WTC11 (cell line): ENCODE measurements at regions of chr15 and their contacts with region 1.

Region 1: DNA sequence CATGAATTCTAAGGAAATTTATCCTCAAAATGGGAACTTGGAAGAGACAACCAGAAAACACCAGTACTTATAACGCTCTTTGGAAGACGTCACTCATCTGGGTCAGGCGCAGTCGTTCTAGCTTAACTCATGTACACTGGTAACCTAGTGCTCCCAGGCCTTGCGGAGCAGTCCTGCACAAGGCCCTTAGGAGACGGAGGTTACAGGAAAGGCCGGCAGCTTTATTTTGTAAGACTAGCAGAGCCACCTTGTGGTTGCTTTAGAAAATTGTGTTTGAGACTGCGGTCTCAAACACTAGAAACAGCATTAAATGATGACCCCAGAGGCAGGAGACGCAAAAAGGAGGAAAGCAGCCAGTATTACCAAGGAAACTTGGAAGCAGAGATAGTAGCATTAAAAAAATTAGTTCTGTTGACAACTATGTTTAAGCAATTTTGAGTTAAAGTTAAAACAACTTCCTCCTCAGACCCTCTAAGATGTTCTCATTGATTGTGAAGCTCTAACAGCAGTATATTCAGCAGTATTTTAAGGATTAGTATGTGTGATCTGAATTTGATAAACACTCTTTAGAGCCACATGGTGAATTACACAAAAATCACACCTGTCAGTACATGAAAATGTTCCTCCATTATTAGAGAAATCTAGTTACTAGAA is 141.9 kb upstream of the C2CD4B start:
- DNase-seq: peak; percentile 62
- ATAC-seq: peak; percentile 99
- H3K4me3 Mint-ChIP-seq: no peak overlapping the region
- H3K27ac Mint-ChIP-seq: no peak overlapping the region
- H3K4me1 Mint-ChIP-seq: peaks cover 14% of the 10 kb centered on the region
- H3K27me3 Mint-ChIP-seq: no peaks in the 10 kb centered on the region
- CTCF ChIP-seq: peak; percentile 57

Region 2: DNA sequence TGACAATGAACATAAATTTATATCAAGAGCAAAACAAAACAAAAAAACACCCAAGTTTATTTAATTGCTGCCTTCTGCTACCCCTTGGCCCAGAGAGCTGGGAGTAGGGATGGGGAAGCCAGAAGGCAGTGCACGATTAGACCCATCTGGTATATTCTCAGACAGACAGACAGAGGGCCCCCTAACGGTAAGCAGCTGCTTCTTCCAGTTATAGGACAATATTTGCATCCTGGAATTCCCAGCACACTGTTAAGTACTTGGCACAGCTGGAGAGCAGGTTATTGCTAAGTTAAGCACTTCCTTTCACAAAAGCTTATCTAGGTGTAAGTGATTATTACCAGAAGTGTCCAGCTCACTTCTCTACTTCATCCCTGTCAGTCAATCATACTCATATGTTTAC is 181.2 kb before region 1 on chr15:
- CTCF ChIA-PET with region 1: interaction called, 14 read pairs
- POLR2A ChIA-PET with region 1: no interaction called
- DNase-seq: no peak
- ATAC-seq: peak; percentile 62
- H3K4me3 Mint-ChIP-seq: no peak overlapping the region
- H3K27ac Mint-ChIP-seq: no peak overlapping the region
- H3K4me1 Mint-ChIP-seq: peaks cover 21% of the 10 kb centered on the region
- H3K27me3 Mint-ChIP-seq: no peaks in the 10 kb centered on the region
- CTCF ChIP-seq: no peak

Region 3: GRCh38 chr15:62241135-62241770 is 65.7 kb before region 1 on chr15:
- CTCF ChIA-PET with region 1: interaction called, 24 read pairs
- POLR2A ChIA-PET with region 1: no interaction called
- DNase-seq: peak; percentile 79
- ATAC-seq: peak; percentile 95
- H3K4me3 Mint-ChIP-seq: no peak overlapping the region
- H3K27ac Mint-ChIP-seq: no peak overlapping the region
- H3K4me1 Mint-ChIP-seq: no peaks in the 10 kb centered on the region
- H3K27me3 Mint-ChIP-seq: peaks cover 2% of the 10 kb centered on the region; the same call in 1 of the 2 replicates
- CTCF ChIP-seq: peak; percentile 45; the same call in 1 of the 2 replicates

Region 4: DNA sequence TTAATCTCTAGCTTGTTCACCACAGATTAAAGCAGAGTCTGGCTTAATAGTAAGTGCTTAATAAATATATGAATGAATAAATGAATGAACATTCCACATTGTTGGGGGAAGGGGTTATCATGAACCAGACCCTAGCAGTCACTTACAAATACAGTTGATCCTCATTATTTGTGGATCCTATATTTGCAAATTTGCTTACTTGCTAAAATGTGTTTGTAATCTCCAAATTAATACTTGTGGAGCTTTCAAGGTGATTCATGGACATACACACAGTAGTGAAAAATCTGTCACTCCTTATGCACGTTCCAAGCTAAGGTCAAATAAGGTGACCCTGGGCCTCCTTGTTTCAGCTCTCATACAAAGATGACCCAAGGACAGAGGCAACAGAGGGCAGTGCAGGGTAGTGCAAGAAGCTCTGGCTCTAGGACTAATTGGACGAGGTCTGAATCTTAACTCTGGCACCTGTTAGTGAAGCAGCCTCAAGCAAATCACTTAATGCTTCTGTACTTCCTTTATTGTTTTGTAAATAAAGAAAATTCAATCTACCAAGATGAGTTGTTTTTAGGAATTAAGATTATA is 29.1 kb before region 1 on chr15:
- CTCF ChIA-PET with region 1: interaction called, 19 read pairs
- POLR2A ChIA-PET with region 1: no interaction called
- DNase-seq: no peak
- ATAC-seq: peak; percentile 55; the same call in 1 of the 2 replicates
- H3K4me3 Mint-ChIP-seq: no peak overlapping the region
- H3K27ac Mint-ChIP-seq: no peak overlapping the region
- H3K4me1 Mint-ChIP-seq: no peaks in the 10 kb centered on the region; the same call in 1 of the 2 replicates
- H3K27me3 Mint-ChIP-seq: no peaks in the 10 kb centered on the region
- CTCF ChIP-seq: no peak

Region 5: DNA sequence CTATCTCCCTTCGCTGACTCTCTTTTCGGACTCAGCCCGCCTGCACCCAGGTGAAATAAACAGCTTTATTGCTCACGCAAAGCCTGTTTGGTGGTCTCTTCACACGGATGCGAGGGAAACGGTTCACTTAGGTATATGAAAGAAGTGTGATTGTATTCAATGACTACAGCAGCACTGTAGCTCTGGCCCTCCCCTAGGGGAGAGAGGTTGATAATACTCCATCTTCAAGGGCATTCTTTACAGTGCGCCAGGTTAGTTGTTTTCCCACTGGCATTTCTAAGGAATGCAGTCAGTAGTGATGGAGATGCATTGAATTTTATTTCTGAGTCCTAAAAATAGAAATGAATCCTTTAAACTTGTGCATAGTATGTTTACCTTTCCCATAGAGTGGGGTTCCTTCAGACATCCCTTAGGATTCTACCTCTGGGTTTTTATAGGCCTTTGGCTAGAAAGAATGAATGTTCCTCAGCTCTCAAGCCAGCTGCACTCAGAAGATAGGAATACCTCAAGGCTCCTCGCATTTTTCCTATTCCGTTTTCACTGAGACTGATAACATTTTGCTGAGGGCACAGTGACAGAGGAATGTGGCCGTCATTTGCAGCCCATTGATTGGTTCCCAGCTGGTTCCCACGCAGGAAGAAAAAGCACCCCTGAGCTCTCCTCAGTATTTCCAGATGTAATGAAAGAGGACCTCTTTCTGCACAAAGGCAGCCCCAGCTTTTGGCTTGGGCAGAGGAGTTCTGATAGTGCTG is 10.0 kb before region 1 on chr15:
- CTCF ChIA-PET with region 1: interaction called, 22 read pairs
- POLR2A ChIA-PET with region 1: no interaction called
- DNase-seq: no peak
- ATAC-seq: peak; percentile 86
- H3K4me3 Mint-ChIP-seq: peak overlapping the region; percentile 36
- H3K27ac Mint-ChIP-seq: peak overlapping the region; percentile 97
- H3K4me1 Mint-ChIP-seq: peaks cover 66% of the 10 kb centered on the region
- H3K27me3 Mint-ChIP-seq: peaks cover 2% of the 10 kb centered on the region; the same call in 1 of the 2 replicates
- CTCF ChIP-seq: no peak

Region 6: GRCh38 chr15:62378772-62379498 is 72.0 kb after region 1 on chr15:
- CTCF ChIA-PET with region 1: no interaction called
- POLR2A ChIA-PET with region 1: no interaction called
- DNase-seq: no peak
- ATAC-seq: no peak
- H3K4me3 Mint-ChIP-seq: no peak overlapping the region
- H3K27ac Mint-ChIP-seq: no peak overlapping the region
- H3K4me1 Mint-ChIP-seq: no peaks in the 10 kb centered on the region
- H3K27me3 Mint-ChIP-seq: no peaks in the 10 kb centered on the region; the same call in 1 of the 2 replicates
- CTCF ChIP-seq: no peak